Sigmoid colon (tissue), 7 donors: ENCODE measurements at regions of chr1 and their contacts with region 1.

Region 1: DNA sequence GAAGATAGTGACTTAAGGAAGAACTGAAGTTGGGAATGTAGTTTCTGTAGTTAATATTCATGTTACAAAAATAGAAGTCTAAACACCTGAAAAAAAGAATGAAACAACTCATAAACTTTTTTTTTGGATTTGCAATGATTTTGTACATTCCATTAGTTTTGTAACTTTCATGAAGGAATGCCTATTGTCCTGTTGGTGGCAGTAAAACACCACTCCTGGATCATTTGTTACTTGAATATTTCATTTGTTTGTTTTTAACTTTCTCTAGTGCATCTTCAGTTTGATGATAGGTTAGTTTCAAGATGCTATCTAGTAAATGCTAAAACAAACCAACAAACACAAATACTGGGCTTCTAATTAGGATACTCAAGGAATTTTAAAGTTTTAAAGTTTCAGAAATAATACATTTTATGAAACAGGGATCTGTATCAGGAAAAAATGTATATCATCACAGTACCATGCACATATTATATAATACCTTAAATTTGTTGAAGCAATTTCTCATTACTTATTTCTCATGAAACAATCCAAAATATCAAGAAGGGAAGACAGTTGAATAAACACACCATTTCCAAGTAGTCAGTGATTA is 229.7 kb upstream of the CACYBP start:
- DNase-seq: no peak
- H3K4me3 ChIP-seq: no peak overlapping the region
- H3K27ac ChIP-seq: no peak overlapping the region
- H3K4me1 ChIP-seq: no peaks in the 10 kb centered on the region
- H3K27me3 ChIP-seq: no peaks in the 10 kb centered on the region
- CTCF ChIP-seq: peak; percentile 30 to 56 (median 44)
- EP300 ChIP-seq: no peak
- POLR2A ChIP-seq: no peak

Region 2: GRCh38 chr1:174692313-174692712 is 77.7 kb before region 1 on chr1:
- intact Hi-C with region 1: no loop called
- DNase-seq: no peak
- H3K4me3 ChIP-seq: no peak overlapping the region
- H3K27ac ChIP-seq: no peak overlapping the region
- H3K4me1 ChIP-seq: no peaks in the 10 kb centered on the region
- H3K27me3 ChIP-seq: no peaks in the 10 kb centered on the region
- CTCF ChIP-seq: no peak
- EP300 ChIP-seq: no peak
- POLR2A ChIP-seq: no peak

Region 3: GRCh38 chr1:174982971-174983689 is 213.1 kb after region 1 on chr1:
- intact Hi-C with region 1: loop called (anchors 5 kb)
- DNase-seq: no peak
- H3K4me3 ChIP-seq: no peak overlapping the region
- H3K27ac ChIP-seq: no peak overlapping the region
- H3K4me1 ChIP-seq: no peaks in the 10 kb centered on the region
- H3K27me3 ChIP-seq: no peaks in the 10 kb centered on the region
- CTCF ChIP-seq: peak in 3 of 4 experiments; percentile 38 to 70 (median 41)
- EP300 ChIP-seq: no peak
- POLR2A ChIP-seq: no peak